ENCODE measurements at regions of chr14 and their contacts with region 1.

Region 1: GRCh38 chr14:68779761-68780323 is 13.0 kb downstream of the ZFP36L1 start:
- DNase-seq: peak in 1 of 6 donors; percentile 14
- ATAC-seq: no peak
- H3K4me3 ChIP-seq: no peak overlapping the region
- H3K27ac ChIP-seq: peak overlapping the region in 3 of 4 donors; percentile 74 to 100 (median 77)
- H3K4me1 ChIP-seq: peaks cover 38 to 58% (median 47%) of the 10 kb centered on the region in 3 donors
- H3K27me3 ChIP-seq: no peaks in the 10 kb centered on the region
- CTCF ChIP-seq: no peak

Region 2: GRCh38 chr14:68676511-68676943 is 103.3 kb before region 1 on chr14:
- intact Hi-C with region 1: loop called in 1 of 3 experiments (anchors 10 kb)
- DNase-seq: no peak
- ATAC-seq: no peak
- H3K4me3 ChIP-seq: no peak overlapping the region
- H3K27ac ChIP-seq: no peak overlapping the region
- H3K4me1 ChIP-seq: peaks cover 36 to 52% (median 42%) of the 10 kb centered on the region in 3 donors
- H3K27me3 ChIP-seq: no peaks in the 10 kb centered on the region
- CTCF ChIP-seq: no peak

Region 3: GRCh38 chr14:69183735-69184134 is 403.9 kb after region 1 on chr14:
- intact Hi-C with region 1: no loop called
- DNase-seq: no peak
- ATAC-seq: no peak
- H3K4me3 ChIP-seq: no peak overlapping the region
- H3K27ac ChIP-seq: no peak overlapping the region
- H3K4me1 ChIP-seq: no peaks in the 10 kb centered on the region
- H3K27me3 ChIP-seq: no peaks in the 10 kb centered on the region
- CTCF ChIP-seq: no peak